ENCODE measurements at regions of chr15 and their contacts with region 1.

Region 1: DNA sequence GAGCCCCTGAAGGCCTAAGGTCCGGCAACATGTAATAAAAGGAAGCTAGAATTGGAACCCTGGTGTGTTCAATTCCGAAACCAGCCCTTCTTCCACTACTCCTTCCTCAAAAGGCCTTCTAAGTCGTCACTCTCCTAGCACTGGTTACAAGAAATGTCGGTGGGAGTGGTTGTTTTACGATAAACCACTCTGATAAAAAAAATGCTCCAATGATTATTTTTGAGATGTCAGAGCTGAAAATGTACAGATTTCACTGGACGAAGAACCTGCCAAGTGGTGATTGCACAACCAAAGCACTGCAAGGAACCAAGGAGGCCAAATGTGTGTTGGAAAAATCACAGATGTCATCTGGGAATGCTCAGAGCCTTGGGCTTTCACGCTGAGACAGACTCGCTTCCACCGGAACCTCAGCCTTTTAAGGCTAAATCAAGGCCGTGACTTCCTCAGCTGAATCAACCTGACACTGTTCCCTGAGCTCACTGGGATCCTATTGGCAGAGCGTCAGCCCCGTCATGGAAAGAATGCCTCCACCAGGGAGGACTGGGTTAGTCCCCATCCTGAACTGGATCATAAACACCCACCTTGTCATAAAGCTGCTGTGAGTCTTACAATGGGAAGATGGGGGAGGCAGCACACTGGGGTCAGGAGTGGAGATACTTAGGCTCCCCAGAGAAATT is 108.1 kb upstream of the THBS1 start:
- DNase-seq: no peak
- H3K4me3 ChIP-seq: no peak overlapping the region
- H3K27ac ChIP-seq: no peak overlapping the region
- H3K4me1 ChIP-seq: peaks cover 26% of the 10 kb centered on the region
- H3K27me3 ChIP-seq: no peaks in the 10 kb centered on the region
- CTCF ChIP-seq: no peak
- POLR2A ChIP-seq: no peak

Region 2: DNA sequence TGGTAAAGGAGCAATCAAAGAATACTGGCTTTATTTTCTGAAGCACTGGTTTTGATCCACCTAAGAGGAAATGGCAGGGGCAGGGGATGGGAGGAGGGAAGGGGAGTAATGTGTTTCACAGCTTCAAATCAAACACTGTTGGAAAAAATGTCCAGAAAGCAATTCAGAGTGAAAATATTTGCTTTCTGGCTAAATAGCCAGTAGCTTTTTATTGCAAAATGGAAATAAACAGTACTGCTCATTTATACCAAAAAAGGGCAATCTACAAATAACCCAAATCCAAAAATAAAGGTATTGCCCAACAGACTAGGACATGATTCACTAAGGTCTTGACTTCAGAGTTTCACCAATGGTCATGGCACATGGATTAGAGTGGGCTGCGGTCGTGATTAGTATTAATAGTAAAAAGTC is 171.2 kb before region 1 on chr15:
- CTCF ChIA-PET with region 1: no interaction called
- POLR2A ChIA-PET with region 1: no interaction called
- dilution Hi-C with region 1: no loop called
- intact Hi-C with region 1: loop called (anchors 1 kb)
- DNase-seq: peak; percentile 37
- H3K4me3 ChIP-seq: no peak overlapping the region
- H3K27ac ChIP-seq: peak overlapping the region; percentile 92
- H3K4me1 ChIP-seq: peaks cover 31% of the 10 kb centered on the region
- H3K27me3 ChIP-seq: no peaks in the 10 kb centered on the region
- CTCF ChIP-seq: no peak
- POLR2A ChIP-seq: no peak

Region 3: GRCh38 chr15:39381517-39381916 is 91.2 kb before region 1 on chr15:
- CTCF ChIA-PET with region 1: no interaction called
- POLR2A ChIA-PET with region 1: no interaction called
- dilution Hi-C with region 1: no loop called
- intact Hi-C with region 1: no loop called
- DNase-seq: no peak
- H3K4me3 ChIP-seq: no peak overlapping the region
- H3K27ac ChIP-seq: no peak overlapping the region
- H3K4me1 ChIP-seq: no peaks in the 10 kb centered on the region
- H3K27me3 ChIP-seq: no peaks in the 10 kb centered on the region
- CTCF ChIP-seq: no peak
- POLR2A ChIP-seq: no peak

Region 4: DNA sequence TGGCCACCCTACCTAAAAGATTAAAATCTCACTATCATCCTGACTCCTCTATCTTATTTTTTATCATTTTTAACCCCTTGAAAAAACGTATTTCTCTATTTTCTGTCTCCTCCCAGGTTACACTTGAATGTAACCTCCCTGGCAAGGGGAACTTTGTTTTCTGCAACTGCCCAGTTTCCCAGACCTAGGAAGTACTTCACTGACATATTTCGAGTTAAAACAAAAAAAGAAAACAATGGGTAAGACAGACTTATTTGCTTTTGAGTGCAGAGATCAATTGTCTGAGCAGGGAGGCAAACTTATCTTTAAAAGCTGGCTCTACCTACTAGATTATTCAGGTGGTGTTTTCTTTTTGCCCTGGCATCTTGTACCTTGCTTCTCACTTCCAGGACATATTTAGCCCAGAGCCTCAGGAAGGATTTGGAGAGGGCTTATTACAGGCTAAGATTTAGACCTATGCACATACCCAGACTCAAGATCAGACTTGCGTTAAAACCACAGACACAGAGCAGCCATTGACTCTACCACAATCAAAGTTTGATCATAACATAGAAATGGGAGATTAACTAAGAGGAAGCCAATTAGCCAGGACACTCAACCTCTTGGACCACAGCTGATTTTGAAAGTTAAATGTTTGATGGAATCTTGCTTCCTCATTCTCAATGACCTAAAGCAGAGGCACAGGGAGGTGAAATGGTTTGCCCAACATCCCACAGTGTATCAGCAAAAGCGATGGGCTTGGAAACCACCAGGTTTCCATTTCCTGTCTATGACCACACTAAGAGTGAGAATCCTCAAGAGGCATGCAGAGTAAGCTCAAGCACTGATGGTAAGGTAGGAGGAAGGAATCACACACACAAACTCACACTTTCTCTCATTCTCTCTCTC is 61.4 kb before region 1 on chr15:
- CTCF ChIA-PET with region 1: no interaction called
- POLR2A ChIA-PET with region 1: no interaction called
- dilution Hi-C with region 1: no loop called
- intact Hi-C with region 1: no loop called
- DNase-seq: no peak
- H3K4me3 ChIP-seq: no peak overlapping the region
- H3K27ac ChIP-seq: no peak overlapping the region
- H3K4me1 ChIP-seq: no peaks in the 10 kb centered on the region
- H3K27me3 ChIP-seq: no peaks in the 10 kb centered on the region
- CTCF ChIP-seq: no peak
- POLR2A ChIP-seq: no peak

Measured in endothelial cell of umbilical vein (primary cell).